PC-3 (cell line): ENCODE measurements at regions of chr5 and their contacts with region 1.

Region 1: DNA sequence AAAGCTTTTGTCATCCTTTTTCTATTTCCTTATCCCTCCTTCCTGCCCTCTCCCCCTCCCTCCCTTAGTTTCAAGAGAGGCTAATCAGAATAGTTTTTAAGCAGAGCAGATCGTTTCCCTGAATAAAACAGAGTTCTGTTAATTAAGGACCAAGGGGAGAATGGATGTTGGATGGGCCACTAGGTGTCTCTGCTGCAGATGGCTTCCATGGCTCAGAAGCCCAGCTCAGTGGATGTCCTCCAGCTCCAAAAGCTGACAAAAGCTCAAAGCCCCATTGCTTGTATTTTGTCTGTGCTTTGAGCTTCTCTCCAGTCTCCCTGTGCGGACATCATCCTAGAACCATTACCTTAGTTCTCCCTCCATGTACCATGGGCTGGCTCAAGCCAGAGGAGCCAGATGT is 21.0 kb upstream of the NPR3 start:
- DNase-seq: peak; percentile 41
- ATAC-seq: peak; percentile 59
- H3K4me3 ChIP-seq: no peak overlapping the region
- H3K27ac ChIP-seq: no peak overlapping the region
- H3K4me1 ChIP-seq: no peaks in the 10 kb centered on the region
- H3K27me3 ChIP-seq: no peaks in the 10 kb centered on the region
- CTCF ChIP-seq: peak; percentile 60

Region 2: DNA sequence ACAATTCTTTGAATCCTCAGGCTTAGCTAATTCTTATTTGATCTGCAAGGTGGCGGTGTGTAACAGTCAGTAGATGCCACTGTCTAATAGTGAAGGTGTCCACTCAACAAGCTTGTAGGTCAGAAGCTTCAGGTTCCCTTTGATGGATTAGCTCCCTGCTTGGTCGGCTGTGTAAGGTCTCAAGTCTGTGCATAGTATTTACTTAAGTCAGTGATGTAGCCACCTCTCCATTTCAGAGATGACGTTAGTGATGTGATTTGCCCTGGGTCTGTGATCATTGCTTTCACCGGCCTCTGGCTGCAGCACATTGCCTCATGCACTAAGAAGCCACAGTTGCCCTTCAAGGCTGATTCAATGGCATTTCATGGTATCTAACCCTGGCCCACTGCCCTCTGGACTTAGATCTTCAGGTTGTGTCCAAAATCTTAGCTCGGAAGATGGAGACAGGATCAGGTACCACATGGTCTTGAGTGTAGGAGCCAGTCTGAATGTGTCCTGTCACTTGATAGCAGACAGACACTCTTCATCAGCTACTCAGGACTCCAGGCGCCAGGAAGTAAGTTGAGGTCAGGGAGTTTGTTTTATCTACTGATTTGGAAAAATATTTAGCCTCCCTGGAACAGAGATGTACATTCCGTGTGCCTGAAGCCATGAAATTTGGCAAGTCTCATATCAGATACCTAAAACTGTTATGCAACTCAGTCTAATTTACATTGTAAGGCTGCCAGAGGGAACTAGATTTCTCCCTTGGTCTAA is 61.9 kb before region 1 on chr5:
- CTCF ChIA-PET with region 1: no interaction called
- POLR2A ChIA-PET with region 1: no interaction called
- intact Hi-C with region 1: loop called (anchors 10 kb)
- DNase-seq: peak; percentile 33
- ATAC-seq: peak; percentile 65
- H3K4me3 ChIP-seq: no peak overlapping the region
- H3K27ac ChIP-seq: no peak overlapping the region
- H3K4me1 ChIP-seq: no peaks in the 10 kb centered on the region
- H3K27me3 ChIP-seq: no peaks in the 10 kb centered on the region
- CTCF ChIP-seq: peak; percentile 45; the same call in 1 of the 2 replicates

Region 3: GRCh38 chr5:32726086-32726557 is 36.0 kb after region 1 on chr5:
- CTCF ChIA-PET with region 1: no interaction called
- POLR2A ChIA-PET with region 1: no interaction called
- intact Hi-C with region 1: no loop called
- DNase-seq: no peak
- ATAC-seq: no peak
- H3K4me3 ChIP-seq: no peak overlapping the region
- H3K27ac ChIP-seq: no peak overlapping the region
- H3K4me1 ChIP-seq: no peaks in the 10 kb centered on the region
- H3K27me3 ChIP-seq: no peaks in the 10 kb centered on the region
- CTCF ChIP-seq: no peak